Activated CD4-positive, alpha-beta T cell treated with anti-CD3 and anti-CD28 coated beads, Interleukin-2, amount 10 ng/mL, durations not matched to agents 24 days and 14 days (primary cell): ENCODE measurements at regions of chr1 and their contacts with region 1.

Region 1: GRCh38 chr1:160607011-160607671 is 27.8 kb upstream of the CD84 start:
- DNase-seq: peak; percentile 91
- H3K4me3 Mint-ChIP-seq: peak overlapping the region; percentile 62
- H3K27ac Mint-ChIP-seq: peak overlapping the region; percentile 81
- H3K4me1 Mint-ChIP-seq: peaks cover 55% of the 10 kb centered on the region
- H3K27me3 Mint-ChIP-seq: no peaks in the 10 kb centered on the region

Region 2: DNA sequence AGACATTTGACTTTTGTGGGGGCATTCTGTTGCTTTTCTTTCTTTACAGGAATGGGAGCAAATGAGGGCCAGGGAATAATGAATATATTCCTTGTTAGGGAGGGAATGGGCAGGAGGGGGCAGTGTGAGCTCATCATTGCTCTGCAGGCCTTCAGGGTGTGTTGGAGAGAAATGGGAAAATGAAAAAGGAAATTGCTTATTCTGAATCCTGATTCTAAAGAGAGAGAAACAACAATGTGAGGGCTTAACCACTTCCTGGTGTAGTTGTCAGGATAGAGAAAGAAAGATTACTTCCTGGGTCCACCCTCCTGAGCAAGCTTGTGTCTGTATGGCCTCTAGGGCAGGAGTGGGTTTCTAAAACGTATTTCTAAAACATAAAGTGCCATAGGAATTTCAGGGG is 178.5 kb before region 1 on chr1:
- intact Hi-C with region 1: loop called (anchors 1 kb)
- DNase-seq: peak; percentile 79
- H3K4me3 Mint-ChIP-seq: peak overlapping the region; percentile 39
- H3K27ac Mint-ChIP-seq: peak overlapping the region; percentile 85
- H3K4me1 Mint-ChIP-seq: peaks cover 52% of the 10 kb centered on the region
- H3K27me3 Mint-ChIP-seq: no peaks in the 10 kb centered on the region

Region 3: GRCh38 chr1:160539990-160540858 is 66.9 kb before region 1 on chr1:
- intact Hi-C with region 1: loop called (anchors 1 kb)
- DNase-seq: peak; percentile 90
- H3K4me3 Mint-ChIP-seq: peak overlapping the region; percentile 72
- H3K27ac Mint-ChIP-seq: peak overlapping the region; percentile 91
- H3K4me1 Mint-ChIP-seq: peaks cover 45% of the 10 kb centered on the region
- H3K27me3 Mint-ChIP-seq: no peaks in the 10 kb centered on the region

Region 4: GRCh38 chr1:160576390-160576789 is 30.8 kb before region 1 on chr1:
- intact Hi-C with region 1: loop called (anchors 1 kb)
- DNase-seq: peak; percentile 75
- H3K4me3 Mint-ChIP-seq: peak overlapping the region; percentile 88
- H3K27ac Mint-ChIP-seq: peak overlapping the region; percentile 92
- H3K4me1 Mint-ChIP-seq: peaks cover 83% of the 10 kb centered on the region
- H3K27me3 Mint-ChIP-seq: no peaks in the 10 kb centered on the region

Region 5: GRCh38 chr1:160711602-160712311 is 104.6 kb after region 1 on chr1 and contains the start of gene CD48:
- intact Hi-C with region 1: no loop called
- DNase-seq: peak; percentile 85
- H3K4me3 Mint-ChIP-seq: no peak within 1 kb of the TSS
- H3K27ac Mint-ChIP-seq: no peak within 1 kb of the TSS
- H3K4me1 Mint-ChIP-seq: peaks cover 26% of the 10 kb centered on the region
- H3K27me3 Mint-ChIP-seq: no peaks in the 10 kb centered on the region
- total RNA-seq, gene CD48: 206 and 208 TPM in 2 replicates

Region 6: DNA sequence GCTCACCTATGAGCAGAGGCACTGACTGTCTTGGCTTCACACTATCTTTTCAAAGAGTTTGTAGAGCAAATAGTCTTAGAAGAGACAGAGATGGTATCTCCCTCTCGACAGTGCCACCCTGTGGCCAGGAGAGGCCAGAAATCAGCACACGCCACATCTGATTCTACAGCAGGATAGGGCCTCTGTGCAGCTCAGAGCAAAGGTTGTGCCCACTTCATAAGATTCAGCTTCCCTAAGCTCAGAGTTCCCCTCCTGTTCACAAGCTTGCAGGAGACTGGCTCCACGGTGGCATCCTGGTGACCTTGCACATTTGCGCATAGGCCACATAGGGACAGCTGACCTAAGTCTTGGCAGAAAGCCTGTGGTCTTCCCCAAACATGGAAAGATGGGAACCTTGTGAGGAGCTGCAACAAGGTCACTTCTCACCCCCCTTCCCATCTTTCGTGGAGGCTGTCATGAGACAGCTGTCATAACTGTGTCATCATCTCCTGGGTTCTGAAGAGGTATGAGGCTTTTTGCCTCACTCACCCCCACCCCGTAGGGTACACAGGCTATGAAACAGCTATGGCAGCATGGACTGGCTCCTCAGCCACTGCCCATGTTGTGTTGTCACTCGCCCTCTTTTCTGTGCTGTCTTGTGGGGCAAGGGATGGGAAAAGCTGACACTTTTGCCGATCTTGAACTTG is 344.4 kb after region 1 on chr1:
- intact Hi-C with region 1: loop called (anchors 5 kb)
- DNase-seq: peak; percentile 91
- H3K4me3 Mint-ChIP-seq: no peak overlapping the region
- H3K27ac Mint-ChIP-seq: no peak overlapping the region
- H3K4me1 Mint-ChIP-seq: peaks cover 6% of the 10 kb centered on the region
- H3K27me3 Mint-ChIP-seq: peaks cover 9% of the 10 kb centered on the region